Testis (tissue), 5 donors: ENCODE measurements at regions of chr15 and their contacts with region 1.

Region 1: DNA sequence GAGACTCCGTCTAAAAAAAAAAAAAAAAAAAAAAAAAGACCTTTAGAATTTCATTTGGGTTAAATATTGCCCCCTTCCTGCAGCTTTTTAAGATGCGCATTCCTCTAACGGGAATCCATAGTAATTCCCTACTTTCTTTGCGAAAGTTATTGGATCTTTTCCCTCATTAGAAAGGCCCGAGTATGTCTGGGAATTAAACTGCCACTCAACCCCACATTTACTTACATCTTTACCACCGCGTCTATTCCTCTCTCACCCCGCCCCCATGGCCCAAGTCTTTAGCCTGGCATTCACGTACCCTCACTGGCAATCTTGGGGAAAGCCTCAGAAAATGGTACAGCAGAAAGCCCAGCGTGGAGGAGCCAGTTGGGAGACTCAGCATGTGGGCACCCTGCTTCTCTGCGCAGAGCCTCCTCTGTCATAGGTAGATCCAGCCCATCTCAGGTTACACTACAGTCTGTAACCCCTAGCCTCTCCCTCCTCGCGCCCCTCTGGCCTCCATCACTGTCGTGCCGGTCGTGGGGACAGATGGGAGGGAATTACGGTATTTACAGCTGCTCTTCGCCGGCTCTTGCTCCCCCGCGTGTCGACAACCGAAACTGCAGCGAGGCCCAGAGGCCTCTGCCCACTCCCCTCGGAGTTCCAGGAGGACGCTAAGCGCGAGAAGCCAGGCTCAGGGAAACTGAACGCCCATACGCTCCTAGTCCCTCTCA is 6.4 kb upstream of the ANKDD1A start:
- DNase-seq: peak; percentile 70
- H3K4me3 ChIP-seq: peak overlapping the region; percentile 15 to 17
- H3K27ac ChIP-seq: no peak overlapping the region
- H3K4me1 ChIP-seq: peaks cover 3% of the 10 kb centered on the region
- H3K27me3 ChIP-seq: no peaks in the 10 kb centered on the region
- CTCF ChIP-seq: peak in 2 of 3 experiments; percentile 58 to 59
- POLR2A ChIP-seq: no peak

Region 2: GRCh38 chr15:64731012-64731806 is 174.1 kb before region 1 on chr15:
- intact Hi-C with region 1: loop called (anchors 10 kb)
- DNase-seq: peak; percentile 92
- H3K4me3 ChIP-seq: no peak overlapping the region
- H3K27ac ChIP-seq: no peak overlapping the region
- H3K4me1 ChIP-seq: peaks cover 2% of the 10 kb centered on the region
- H3K27me3 ChIP-seq: no peaks in the 10 kb centered on the region
- CTCF ChIP-seq: peak; percentile 83 to 92 (median 84)
- POLR2A ChIP-seq: no peak